ENCODE measurements at regions of chr2 and their contacts with region 1.

Region 1: GRCh38 chr2:62456721-62457539 is 49.1 kb downstream of the TMEM17 start:
- DNase-seq: peak; percentile 78
- ATAC-seq: peak; percentile 98
- H3K4me3 ChIP-seq: peak overlapping the region; percentile 77
- H3K27ac ChIP-seq: peak overlapping the region; percentile 89
- H3K4me1 ChIP-seq: peaks cover 9% of the 10 kb centered on the region; the same call in 1 of the 2 replicates
- H3K27me3 ChIP-seq: no peaks in the 10 kb centered on the region
- CTCF ChIP-seq: peak; percentile 93
- POLR2A ChIP-seq: peak; percentile 45; the same call in 1 of the 2 replicates
- RAD21 ChIP-seq: peak; percentile 97

Region 2: GRCh38 chr2:62577994-62578781 is 121.3 kb after region 1 on chr2:
- CTCF ChIA-PET with region 1: no interaction called
- POLR2A ChIA-PET with region 1: interaction called, 14 read pairs
- dilution Hi-C with region 1: no loop called
- in situ Hi-C with region 1: no loop called
- intact Hi-C with region 1: loop called (anchors 5 kb)
- DNase-seq: peak; percentile 92
- ATAC-seq: peak; percentile 51
- H3K4me3 ChIP-seq: no peak overlapping the region
- H3K27ac ChIP-seq: peak overlapping the region; percentile 90
- H3K4me1 ChIP-seq: peaks cover 22% of the 10 kb centered on the region
- H3K27me3 ChIP-seq: no peaks in the 10 kb centered on the region
- CTCF ChIP-seq: no peak
- POLR2A ChIP-seq: no peak
- RAD21 ChIP-seq: no peak

Region 3: DNA sequence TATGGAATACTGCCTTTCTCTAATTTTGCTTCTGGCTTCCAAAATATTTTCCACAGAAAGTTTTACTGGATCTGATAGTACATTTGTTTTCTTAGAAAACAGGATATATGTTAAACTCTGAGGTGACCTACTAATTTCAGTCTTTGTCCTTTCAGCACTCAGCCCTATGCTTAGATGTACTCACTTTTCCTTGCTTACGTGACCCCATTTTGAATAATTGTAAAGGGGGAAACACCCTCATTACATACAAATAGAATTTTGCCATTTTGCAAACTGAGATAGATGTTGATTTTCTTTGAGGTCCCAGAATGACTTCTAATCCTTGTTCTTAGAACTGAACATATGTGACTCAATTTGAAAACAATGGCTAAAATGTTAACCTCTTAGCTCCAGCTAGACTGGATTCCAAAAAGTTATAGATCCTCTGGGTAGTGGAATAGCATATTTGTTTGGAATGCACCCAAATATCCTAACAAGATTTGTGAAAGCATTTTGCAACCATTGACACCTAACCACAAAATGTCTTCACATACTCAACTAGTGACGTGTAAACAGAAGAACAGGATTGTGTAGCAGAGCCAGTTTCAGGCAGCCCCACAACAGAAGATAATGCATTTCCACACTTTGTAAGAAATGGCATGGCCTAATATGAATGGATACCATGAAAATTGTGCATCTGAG is 203.8 kb after region 1 on chr2:
- CTCF ChIA-PET with region 1: interaction called, 8 read pairs
- POLR2A ChIA-PET with region 1: no interaction called
- dilution Hi-C with region 1: no loop called
- in situ Hi-C with region 1: no loop called
- intact Hi-C with region 1: loop called (anchors 2 kb)
- DNase-seq: peak; percentile 89
- ATAC-seq: peak; percentile 27
- H3K4me3 ChIP-seq: no peak overlapping the region
- H3K27ac ChIP-seq: peak overlapping the region; percentile 49; the same call in 1 of the 2 replicates
- H3K4me1 ChIP-seq: peaks cover 16% of the 10 kb centered on the region
- H3K27me3 ChIP-seq: no peaks in the 10 kb centered on the region
- CTCF ChIP-seq: no peak
- POLR2A ChIP-seq: no peak
- RAD21 ChIP-seq: no peak

Region 4: GRCh38 chr2:62774555-62775366 is 317.8 kb after region 1 on chr2:
- CTCF ChIA-PET with region 1: interaction called, 45 read pairs
- POLR2A ChIA-PET with region 1: no interaction called
- dilution Hi-C with region 1: no loop called
- in situ Hi-C with region 1: loop called (anchors 5 kb)
- intact Hi-C with region 1: loop called (anchors 1 kb)
- DNase-seq: peak; percentile 63
- ATAC-seq: peak; percentile 83
- H3K4me3 ChIP-seq: no peak overlapping the region
- H3K27ac ChIP-seq: no peak overlapping the region
- H3K4me1 ChIP-seq: no peaks in the 10 kb centered on the region
- H3K27me3 ChIP-seq: no peaks in the 10 kb centered on the region
- CTCF ChIP-seq: peak; percentile 80
- POLR2A ChIP-seq: no peak
- RAD21 ChIP-seq: peak; percentile 88

Region 5: GRCh38 chr2:63189026-63189425 is 732.1 kb after region 1 on chr2:
- CTCF ChIA-PET with region 1: interaction called, 5 read pairs
- POLR2A ChIA-PET with region 1: no interaction called
- dilution Hi-C with region 1: no loop called
- in situ Hi-C with region 1: no loop called
- intact Hi-C with region 1: loop called (anchors 2 kb)
- DNase-seq: peak; percentile 44
- ATAC-seq: peak; percentile 94
- H3K4me3 ChIP-seq: no peak overlapping the region
- H3K27ac ChIP-seq: no peak overlapping the region
- H3K4me1 ChIP-seq: no peaks in the 10 kb centered on the region
- H3K27me3 ChIP-seq: no peaks in the 10 kb centered on the region
- CTCF ChIP-seq: peak; percentile 65
- POLR2A ChIP-seq: no peak
- RAD21 ChIP-seq: peak; percentile 66

Measured in IMR-90 (cell line).